ENCODE measurements at regions of chr9 and their contacts with region 1.

Region 1: GRCh38 chr9:124257844-124258606 is at the start of gene NEK6:
- DNase-seq: no peak
- H3K4me3 Mint-ChIP-seq: peak within 1 kb of the TSS; percentile 89
- H3K27ac Mint-ChIP-seq: peak within 1 kb of the TSS; percentile 91
- H3K4me1 Mint-ChIP-seq: peaks cover 31% of the 10 kb centered on the region
- H3K27me3 Mint-ChIP-seq: no peaks in the 10 kb centered on the region
- CTCF ChIP-seq: no peak
- total RNA-seq, gene NEK6: 25.1 and 27.5 TPM in 2 replicates

Region 2: GRCh38 chr9:124239249-124240073 is 18.6 kb before region 1 on chr9:
- CTCF ChIA-PET with region 1: no interaction called
- POLR2A ChIA-PET with region 1: no interaction called
- intact Hi-C with region 1: no loop called
- DNase-seq: no peak
- H3K4me3 Mint-ChIP-seq: no peak overlapping the region
- H3K27ac Mint-ChIP-seq: no peak overlapping the region
- H3K4me1 Mint-ChIP-seq: no peaks in the 10 kb centered on the region
- H3K27me3 Mint-ChIP-seq: peaks cover 33% of the 10 kb centered on the region
- CTCF ChIP-seq: no peak

Region 3: DNA sequence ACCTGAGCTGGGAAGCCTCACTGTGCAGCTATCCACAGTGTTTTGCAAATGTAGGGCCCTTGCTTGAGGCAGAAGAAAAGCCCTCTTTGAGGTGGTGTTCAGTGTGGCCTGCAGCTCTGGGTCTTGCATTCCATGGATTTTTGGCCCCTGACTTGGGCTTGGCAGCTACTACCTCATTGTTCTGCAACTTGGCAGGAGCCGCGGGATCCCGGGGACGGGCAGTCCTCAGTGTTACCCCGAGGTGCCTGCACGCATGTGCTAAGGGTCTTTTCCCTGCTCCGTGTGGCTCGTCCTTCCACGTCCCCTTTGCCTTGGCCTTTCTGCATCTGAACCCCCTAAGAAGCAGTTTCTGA is 39.5 kb after region 1 on chr9:
- CTCF ChIA-PET with region 1: interaction called, 3 read pairs
- POLR2A ChIA-PET with region 1: interaction called, 5 read pairs
- intact Hi-C with region 1: loop called (anchors 5 kb)
- DNase-seq: peak; percentile 94
- H3K4me3 Mint-ChIP-seq: no peak overlapping the region
- H3K27ac Mint-ChIP-seq: no peak overlapping the region
- H3K4me1 Mint-ChIP-seq: peaks cover 43% of the 10 kb centered on the region
- H3K27me3 Mint-ChIP-seq: no peaks in the 10 kb centered on the region
- CTCF ChIP-seq: no peak

Region 4: DNA sequence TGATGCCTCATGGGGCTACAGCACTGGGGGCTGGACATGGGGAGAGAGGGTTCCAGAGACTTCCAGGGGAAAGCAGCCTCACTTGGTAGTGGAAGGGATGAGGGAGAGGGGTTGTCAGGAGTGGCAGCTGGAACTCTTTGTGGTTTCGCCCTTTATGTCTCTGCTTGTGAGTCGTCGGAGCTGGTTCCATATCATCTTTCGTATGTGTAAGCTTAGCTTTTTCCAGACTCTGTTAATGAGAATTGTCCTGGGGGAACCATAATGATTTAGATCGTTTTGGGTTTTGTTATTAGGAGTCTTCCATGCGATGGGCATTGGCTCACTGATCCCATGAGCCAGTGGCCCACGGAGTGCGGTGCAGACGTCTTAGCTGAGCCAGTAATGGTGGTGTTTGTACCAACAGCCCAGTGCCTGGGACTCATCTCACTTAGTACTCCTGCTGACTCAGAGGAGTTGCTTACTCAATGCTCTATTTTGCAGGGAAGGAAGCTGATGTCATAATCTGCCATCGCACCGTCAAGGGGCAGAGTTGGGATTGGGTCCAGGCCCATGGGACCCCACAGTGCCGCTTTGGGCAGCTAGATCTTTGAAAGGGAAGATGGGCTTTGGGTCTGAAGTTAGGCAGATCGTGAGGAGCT is 48.2 kb after region 1 on chr9:
- CTCF ChIA-PET with region 1: interaction called, 3 read pairs
- POLR2A ChIA-PET with region 1: interaction called, 3 read pairs
- intact Hi-C with region 1: loop called (anchors 2 kb)
- DNase-seq: peak; percentile 81
- H3K4me3 Mint-ChIP-seq: no peak overlapping the region
- H3K27ac Mint-ChIP-seq: peak overlapping the region; percentile 55
- H3K4me1 Mint-ChIP-seq: peaks cover 28% of the 10 kb centered on the region
- H3K27me3 Mint-ChIP-seq: no peaks in the 10 kb centered on the region
- CTCF ChIP-seq: no peak

Region 5: GRCh38 chr9:124330011-124330697 is 72.1 kb after region 1 on chr9:
- CTCF ChIA-PET with region 1: no interaction called
- POLR2A ChIA-PET with region 1: no interaction called
- intact Hi-C with region 1: no loop called
- DNase-seq: no peak
- H3K4me3 Mint-ChIP-seq: no peak overlapping the region
- H3K27ac Mint-ChIP-seq: no peak overlapping the region
- H3K4me1 Mint-ChIP-seq: no peaks in the 10 kb centered on the region
- H3K27me3 Mint-ChIP-seq: no peaks in the 10 kb centered on the region
- CTCF ChIP-seq: no peak

Measured in MCF 10A (cell line).